Breast epithelium (tissue), 4 donors: ENCODE measurements at regions of chr7 and their contacts with region 1.

Region 1: GRCh38 chr7:48781783-48782182 is 142.6 kb upstream of the CDC14C start:
- DNase-seq: no peak
- H3K4me3 ChIP-seq: no peak overlapping the region
- H3K27ac ChIP-seq: no peak overlapping the region
- H3K4me1 ChIP-seq: no peaks in the 10 kb centered on the region
- H3K27me3 ChIP-seq: no peaks in the 10 kb centered on the region
- CTCF ChIP-seq: no peak
- POLR2A ChIP-seq: no peak

Region 2: DNA sequence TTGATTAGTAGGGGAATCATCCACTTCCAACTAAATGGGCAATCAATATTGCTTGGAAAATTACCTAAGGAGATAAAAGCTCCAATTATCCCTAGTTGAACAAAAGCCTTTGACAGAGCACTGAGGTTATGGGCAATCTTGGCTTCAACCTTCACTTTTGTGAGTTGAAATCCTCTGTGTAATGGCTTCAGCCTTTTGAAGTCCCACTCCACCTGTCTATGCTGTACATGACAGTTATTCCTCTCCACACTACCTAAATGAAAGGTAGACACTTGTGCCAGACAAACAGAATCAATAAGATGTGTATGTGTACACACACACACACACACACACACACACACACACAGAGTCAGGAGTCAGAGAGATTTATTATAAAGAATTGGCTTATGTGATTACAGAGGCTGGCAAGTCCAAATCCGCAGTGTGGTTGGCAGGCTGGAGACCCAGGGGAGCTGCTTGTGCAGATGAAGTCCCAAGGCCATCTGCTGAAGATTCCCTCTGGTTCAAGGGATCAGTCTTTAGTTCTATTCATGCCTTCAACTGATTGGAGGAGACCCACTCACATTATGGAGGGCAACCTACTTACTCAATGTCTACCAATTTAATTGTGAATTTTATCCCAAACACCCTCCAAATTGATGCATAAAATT is 22.2 kb before region 1 on chr7:
- intact Hi-C with region 1: loop called (anchors 2 kb)
- DNase-seq: no peak
- H3K4me3 ChIP-seq: no peak overlapping the region
- H3K27ac ChIP-seq: no peak overlapping the region
- H3K4me1 ChIP-seq: no peaks in the 10 kb centered on the region
- H3K27me3 ChIP-seq: no peaks in the 10 kb centered on the region
- CTCF ChIP-seq: no peak
- POLR2A ChIP-seq: no peak